PC-9 (cell line): ENCODE measurements at regions of chr10 and their contacts with region 1.

Region 1: DNA sequence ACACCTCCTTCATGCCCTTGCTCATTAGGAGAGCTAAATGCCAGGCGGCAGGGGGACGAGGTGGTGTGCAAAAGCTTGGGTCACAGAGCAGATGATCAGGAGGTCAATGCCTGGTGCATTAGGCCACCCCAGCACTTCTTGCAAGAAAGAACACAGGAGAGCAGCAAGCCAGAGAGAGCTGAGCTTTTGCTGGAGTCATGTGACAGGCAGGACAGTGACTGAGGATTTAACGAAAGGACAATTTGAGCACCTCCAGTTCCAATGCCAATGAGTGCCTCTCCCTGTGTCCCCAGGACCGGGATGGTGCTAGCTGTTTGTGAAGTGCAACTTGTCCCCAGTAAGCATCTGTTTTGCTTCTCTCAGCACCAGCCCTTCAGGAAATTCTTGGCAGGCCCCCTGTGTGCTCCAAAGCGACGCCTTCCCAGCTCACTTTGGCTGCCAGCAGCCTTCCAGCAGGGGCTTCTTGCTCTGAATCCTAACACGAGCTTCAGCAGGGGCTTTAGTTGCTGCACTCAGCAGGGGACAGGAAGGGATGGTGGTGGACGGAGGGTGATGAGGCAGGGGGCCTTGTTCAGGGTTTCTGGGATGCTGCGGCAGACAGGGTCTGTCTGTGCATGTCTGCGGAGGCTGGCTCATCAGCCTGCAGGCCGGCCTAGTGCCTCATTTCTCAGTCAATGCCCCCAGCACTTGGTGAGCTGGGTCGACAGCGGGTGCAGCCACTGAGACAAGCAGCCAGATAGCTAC is 368.1 kb downstream of the RPS24 start:
- DNase-seq: no peak
- H3K4me3 ChIP-seq: no peak overlapping the region
- H3K27ac ChIP-seq: no peak overlapping the region
- H3K4me1 ChIP-seq: no peaks in the 10 kb centered on the region
- H3K27me3 ChIP-seq: peaks cover 31% of the 10 kb centered on the region; the same call in 1 of the 2 replicates
- CTCF ChIP-seq: no peak

Region 2: GRCh38 chr10:78328592-78329404 is 73.0 kb before region 1 on chr10:
- CTCF ChIA-PET with region 1: no interaction called
- POLR2A ChIA-PET with region 1: interaction called, 11 read pairs
- intact Hi-C with region 1: no loop called
- DNase-seq: no peak
- H3K4me3 ChIP-seq: no peak overlapping the region
- H3K27ac ChIP-seq: no peak overlapping the region
- H3K4me1 ChIP-seq: no peaks in the 10 kb centered on the region
- H3K27me3 ChIP-seq: peaks cover 4% of the 10 kb centered on the region; the same call in 1 of the 2 replicates
- CTCF ChIP-seq: no peak